Ascending aorta (tissue), 2 donors: ENCODE measurements at regions of chr19 and their contacts with region 1.

Region 1: DNA sequence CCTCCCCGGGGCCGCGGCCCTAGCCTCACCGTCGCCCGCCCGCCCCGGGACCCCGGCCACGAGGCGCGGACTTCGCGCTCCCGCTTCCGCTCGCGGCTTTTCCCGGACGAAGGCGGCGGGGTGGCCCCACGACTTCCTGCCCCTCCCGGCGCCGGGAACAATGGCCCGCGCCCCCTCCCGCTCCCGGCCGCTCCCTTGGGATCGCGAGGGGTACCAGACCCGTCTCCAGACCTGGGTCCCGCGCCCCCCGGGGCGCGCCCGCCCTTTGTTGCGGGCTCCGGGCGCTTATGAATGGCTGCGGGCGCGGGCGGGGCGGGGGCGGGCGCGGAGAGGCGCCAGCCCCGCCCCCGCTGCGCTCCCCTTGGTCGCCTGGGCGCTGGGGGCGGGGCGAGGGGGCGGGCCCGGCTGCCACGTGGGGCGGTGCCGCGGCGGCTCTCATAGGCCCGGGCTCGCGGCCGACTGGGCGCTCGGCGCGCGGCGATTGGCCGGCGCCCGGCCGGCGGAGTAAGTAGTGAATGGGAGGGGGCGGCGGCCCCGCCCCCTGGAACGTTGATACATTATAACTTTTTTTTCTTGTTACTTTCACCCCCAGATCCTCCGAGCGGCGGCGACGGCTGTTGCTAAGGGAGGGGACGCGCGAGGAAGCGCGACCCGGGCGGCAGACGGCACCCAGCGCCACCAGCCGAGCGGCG is 1.1 kb downstream of the MIDN start:
- DNase-seq: peak; percentile 91 to 98
- H3K4me3 ChIP-seq: peak overlapping the region; percentile 95
- H3K27ac ChIP-seq: peak overlapping the region; percentile 94 to 99
- H3K4me1 ChIP-seq: peaks cover 32 to 45% of the 10 kb centered on the region in 2 donors
- H3K27me3 ChIP-seq: no peaks in the 10 kb centered on the region
- CTCF ChIP-seq: no peak

Region 2: GRCh38 chr19:1260636-1261537 is 11.4 kb after region 1 on chr19:
- intact Hi-C with region 1: loop called (anchors 1 kb)
- DNase-seq: peak; percentile 84 to 98
- H3K4me3 ChIP-seq: peak overlapping the region; percentile 76 to 83
- H3K27ac ChIP-seq: peak overlapping the region; percentile 96 to 99
- H3K4me1 ChIP-seq: peaks cover 25 to 54% of the 10 kb centered on the region in 2 donors
- H3K27me3 ChIP-seq: no peaks in the 10 kb centered on the region
- CTCF ChIP-seq: no peak

Region 3: DNA sequence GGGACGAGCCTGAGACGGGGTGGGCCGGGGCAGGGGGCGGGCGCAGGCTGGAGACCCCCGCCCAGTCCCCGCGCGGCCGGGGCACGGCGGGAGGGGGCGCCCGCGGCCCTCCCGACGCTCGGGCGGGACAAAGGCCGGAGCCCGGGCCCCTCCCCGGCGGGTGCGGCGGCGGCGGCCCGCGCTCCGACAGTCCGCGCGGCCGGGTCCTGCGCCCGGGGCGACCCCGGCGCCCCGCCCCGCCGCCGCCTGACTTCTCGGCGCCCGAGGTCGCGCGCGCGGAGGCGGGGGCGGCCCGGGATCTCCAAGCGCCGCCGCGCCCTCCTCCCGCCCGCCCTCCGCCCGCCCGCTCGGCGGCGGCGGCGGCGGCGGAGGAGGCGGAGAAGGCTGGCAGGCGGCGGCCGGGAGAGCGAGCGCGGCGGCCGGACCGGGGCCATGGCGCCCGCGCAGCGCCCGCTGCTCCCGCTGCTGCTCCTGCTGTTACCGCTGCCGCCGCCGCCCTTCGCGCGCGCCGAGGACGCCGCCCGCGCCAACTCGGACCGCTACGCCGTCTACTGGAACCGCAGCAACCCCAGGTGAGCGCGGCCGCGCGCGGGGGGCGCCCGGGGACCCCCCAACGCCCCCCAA is 36.4 kb after region 1 on chr19 and contains the start of gene EFNA2:
- intact Hi-C with region 1: no loop called
- DNase-seq: no peak
- H3K4me3 ChIP-seq: no peak within 1 kb of the TSS
- H3K27ac ChIP-seq: no peak within 1 kb of the TSS
- H3K4me1 ChIP-seq: no peaks in the 10 kb centered on the region
- H3K27me3 ChIP-seq: peaks cover 20% of the 10 kb centered on the region
- CTCF ChIP-seq: no peak
- total RNA-seq, gene EFNA2: not detected